ENCODE measurements at regions of chr14 and their contacts with region 1.

Region 1: GRCh38 chr14:78566026-78566858 is 396.1 kb downstream of the NRXN3 start:
- DNase-seq: no peak
- H3K4me3 ChIP-seq: peak overlapping the region in 3 of 4 donors; percentile 8 to 53 (median 26)
- H3K27ac ChIP-seq: no peak overlapping the region
- H3K4me1 ChIP-seq: peaks cover 0 to 8% (median 0%) of the 10 kb centered on the region in 3 donors
- H3K27me3 ChIP-seq: no peaks in the 10 kb centered on the region
- CTCF ChIP-seq: peak in 5 of 6 experiments; percentile 41 to 58 (median 53)
- POLR2A ChIP-seq: no peak

Region 2: DNA sequence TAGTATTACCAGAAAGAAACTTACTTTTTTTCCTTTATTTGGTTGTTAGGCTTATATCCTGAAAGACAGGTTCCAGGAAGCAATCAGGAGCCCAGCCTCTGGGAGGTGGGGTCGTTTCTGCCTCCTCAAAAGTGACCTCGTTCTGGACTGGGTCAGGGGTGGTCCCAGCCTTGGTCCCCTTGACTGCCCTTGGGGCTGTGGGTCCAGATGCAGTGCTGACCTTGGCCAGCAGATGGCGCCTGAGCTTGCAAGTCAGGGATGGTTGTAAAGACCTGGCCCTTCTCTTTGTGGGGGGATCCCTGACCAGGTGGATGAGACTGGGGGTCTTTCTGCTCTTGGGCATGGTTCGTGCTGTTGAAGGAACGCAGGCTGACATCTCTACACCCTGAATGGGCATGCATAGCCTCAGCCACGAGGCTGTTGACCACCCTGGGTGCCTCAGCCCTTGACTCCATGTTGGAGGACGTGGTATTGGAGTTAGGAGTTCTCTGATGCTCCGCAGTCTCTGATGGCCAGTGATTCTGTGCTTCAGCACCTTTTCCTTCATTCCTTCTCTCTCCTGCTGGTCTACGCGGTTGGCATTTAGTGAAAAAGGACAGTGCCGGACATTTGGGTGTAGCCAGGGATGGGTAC is 704.0 kb before region 1 on chr14:
- intact Hi-C with region 1: loop called (anchors 10 kb)
- DNase-seq: no peak
- H3K4me3 ChIP-seq: no peak overlapping the region
- H3K27ac ChIP-seq: no peak overlapping the region
- H3K4me1 ChIP-seq: no peaks in the 10 kb centered on the region
- H3K27me3 ChIP-seq: no peaks in the 10 kb centered on the region
- CTCF ChIP-seq: peak; percentile 62 to 95 (median 80)
- POLR2A ChIP-seq: no peak

Region 3: DNA sequence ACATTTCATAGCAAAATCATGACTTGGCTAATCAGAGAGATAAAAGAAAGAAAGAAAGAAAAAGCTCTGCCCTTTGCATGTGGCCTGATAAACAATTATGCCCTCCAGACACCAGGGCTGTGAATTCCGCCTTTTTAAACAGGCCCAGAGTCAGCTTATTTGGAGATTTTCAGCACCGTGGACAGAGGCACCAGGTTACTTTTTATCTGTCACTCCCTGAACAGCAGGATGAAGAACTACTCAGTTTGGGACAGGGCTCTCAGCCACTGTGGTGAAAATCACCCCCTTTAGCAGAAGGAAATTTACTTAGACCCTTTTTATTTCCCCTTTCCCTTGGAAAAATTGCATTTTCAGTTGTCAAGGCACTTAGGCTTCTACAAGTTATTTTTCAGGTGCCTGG is 36.2 kb before region 1 on chr14:
- intact Hi-C with region 1: no loop called
- DNase-seq: no peak
- H3K4me3 ChIP-seq: no peak overlapping the region
- H3K27ac ChIP-seq: no peak overlapping the region
- H3K4me1 ChIP-seq: no peaks in the 10 kb centered on the region
- H3K27me3 ChIP-seq: no peaks in the 10 kb centered on the region
- CTCF ChIP-seq: no peak
- POLR2A ChIP-seq: no peak